GM13977 (cell line): ENCODE measurements at regions of chr2 and their contacts with region 1.

Region 1: DNA sequence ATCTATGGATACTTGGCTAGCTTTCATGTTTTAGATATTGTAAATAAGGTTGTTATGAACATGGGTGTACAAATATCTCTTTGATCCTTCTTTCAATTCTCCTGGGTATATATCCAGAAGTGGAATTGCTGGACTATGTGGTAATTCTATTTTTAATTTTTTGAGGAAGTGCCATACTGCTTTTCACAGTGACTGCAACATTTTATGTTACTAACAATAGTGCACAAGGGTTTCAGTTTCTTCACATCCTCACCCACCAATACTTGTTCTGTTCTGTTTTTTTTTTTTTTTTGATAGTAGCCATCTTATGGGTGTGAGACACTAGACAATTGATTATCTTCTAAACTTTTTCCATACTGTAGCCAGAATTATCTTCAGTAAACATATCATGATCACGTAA is 17.3 kb upstream of the NEUROD1 start:
- DNase-seq: no peak
- CTCF ChIP-seq: no peak

Region 2: DNA sequence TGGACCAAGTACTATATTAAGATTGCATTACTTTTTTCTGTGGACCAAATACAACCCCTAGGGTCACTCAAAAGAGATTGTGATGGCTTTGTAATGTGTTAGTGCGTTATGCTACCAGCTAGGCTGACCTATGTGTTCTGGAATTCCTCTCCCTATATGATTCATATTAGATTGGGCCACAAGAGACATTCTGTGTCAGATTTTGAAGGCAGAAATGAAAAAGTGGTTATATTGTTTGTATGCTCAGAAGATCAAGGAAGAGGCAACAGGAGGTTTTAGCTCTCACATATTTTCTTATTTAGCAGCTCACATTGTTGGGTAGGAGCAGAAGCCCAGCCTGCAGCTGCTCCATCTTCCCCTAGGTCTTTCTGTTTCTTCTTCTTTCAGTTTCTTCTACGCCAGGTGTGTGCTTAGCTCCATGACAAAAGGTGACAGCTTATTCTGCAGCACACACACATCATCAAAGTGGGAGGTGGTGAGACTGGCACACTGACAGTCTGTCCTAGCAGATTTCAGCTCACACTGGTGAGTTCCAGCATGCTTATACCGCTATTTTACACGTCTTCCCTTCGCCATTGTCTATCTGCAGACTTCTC is 873.9 kb before region 1 on chr2:
- in situ Hi-C with region 1: no loop called
- DNase-seq: no peak
- CTCF ChIP-seq: no peak

Region 3: DNA sequence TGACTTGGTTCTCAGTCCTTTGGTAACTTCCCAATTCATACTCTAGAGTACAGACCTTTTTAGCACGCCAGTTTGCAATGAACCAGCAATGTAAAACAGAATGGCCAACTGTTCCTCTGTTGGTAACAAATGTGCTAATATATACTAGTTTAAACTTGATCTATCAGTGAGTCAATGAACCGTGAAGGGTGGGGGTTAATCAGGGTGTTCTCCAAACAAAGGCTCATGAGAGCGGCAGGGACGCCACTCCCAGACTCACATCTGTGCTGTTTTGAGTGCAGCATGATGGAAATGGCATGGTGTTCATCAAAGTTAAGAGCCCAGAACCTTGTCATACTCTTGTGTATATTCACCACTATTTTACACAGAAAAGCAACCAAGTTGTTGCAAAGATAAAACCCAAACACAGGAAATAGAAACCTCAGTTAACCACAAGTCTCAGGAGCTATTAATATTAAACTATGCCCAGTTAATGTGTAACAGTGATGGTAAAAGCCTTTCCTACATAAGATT is 110.9 kb before region 1 on chr2:
- in situ Hi-C with region 1: loop called (anchors 10 kb)
- DNase-seq: no peak
- CTCF ChIP-seq: no peak